ENCODE measurements at regions of chr2 and their contacts with region 1.

Region 1: DNA sequence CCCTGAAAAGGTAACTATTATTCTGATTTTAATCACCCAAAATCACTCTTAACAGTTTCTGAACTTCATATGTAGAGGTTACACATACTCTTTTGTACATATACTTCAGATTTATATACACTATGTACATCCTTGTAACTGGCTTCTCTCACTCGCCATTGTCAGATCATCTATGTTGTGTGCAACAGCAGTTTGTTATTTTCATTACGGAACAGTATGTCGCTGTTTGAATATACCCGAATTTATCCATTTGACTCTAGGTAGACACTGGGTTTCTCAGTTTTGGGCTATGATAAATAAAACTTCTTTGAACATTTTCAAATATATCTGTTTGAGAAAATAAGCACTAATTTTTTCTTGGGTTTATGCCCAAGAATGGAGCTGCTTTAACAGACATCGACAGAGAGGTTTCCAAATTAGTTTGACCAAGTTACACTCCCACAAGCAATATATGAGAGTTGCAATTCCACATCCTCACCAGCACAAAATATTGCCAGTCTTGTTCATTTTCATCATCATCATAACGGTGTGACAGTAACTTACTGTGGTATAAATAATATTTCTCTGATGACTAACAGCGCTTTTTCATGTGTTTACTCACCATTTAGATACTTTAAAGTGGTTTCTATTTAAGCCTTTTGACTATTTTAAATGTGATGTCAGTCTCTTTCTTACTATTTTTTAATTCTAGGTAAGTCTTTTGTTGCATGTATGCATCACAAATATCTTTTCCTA is 80.9 kb downstream of the SMC6 start:
- DNase-seq: no peak
- ATAC-seq: peak; percentile 59; the same call in 1 of the 2 replicates
- H3K4me3 ChIP-seq: no peak overlapping the region
- H3K27ac ChIP-seq: no peak overlapping the region
- H3K4me1 ChIP-seq: 0 out of 4 replicates have a peak, but pooled peaks cover 0 to 3% of the 10 kb centered on the region in 2 experiments
- H3K27me3 ChIP-seq: no peaks in the 10 kb centered on the region
- CTCF ChIP-seq: peak in 1 of 3 experiments; percentile 12; a peak in 1 of 6 replicates
- POLR2A ChIP-seq: no peak
- RAD21 ChIP-seq: no peak

Region 2: DNA sequence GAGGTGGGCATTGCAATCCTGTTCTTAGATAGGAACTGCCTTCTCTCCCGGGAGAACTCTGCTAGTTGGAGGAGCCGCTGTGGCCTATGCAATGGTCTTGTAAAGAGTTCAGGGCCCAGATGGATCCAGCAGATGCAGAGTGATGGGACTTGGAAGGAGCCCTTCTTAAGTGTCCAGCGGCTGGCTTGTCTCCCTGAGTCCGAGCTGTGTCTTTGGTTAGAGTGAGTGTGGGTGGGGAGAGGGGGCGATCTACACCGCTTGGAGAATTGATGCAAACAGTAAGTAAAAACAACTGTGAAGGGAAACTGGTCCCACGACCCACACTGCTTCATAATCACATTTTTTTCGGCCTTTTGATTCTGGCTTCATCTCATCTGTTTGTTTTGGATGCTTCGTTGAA is 917.3 kb before region 1 on chr2:
- CTCF ChIA-PET with region 1: no interaction called
- POLR2A ChIA-PET with region 1: no interaction called
- RAD21 ChIA-PET with region 1: no interaction called
- intact Hi-C with region 1: no loop called
- DNase-seq: no peak
- ATAC-seq: no peak
- H3K4me3 ChIP-seq: no peak overlapping the region
- H3K27ac ChIP-seq: no peak overlapping the region
- H3K4me1 ChIP-seq: no peaks in the 10 kb centered on the region
- H3K27me3 ChIP-seq: peaks cover 13% of the 10 kb centered on the region
- CTCF ChIP-seq: no peak
- POLR2A ChIP-seq: no peak
- RAD21 ChIP-seq: no peak

Region 3: GRCh38 chr2:17171446-17172049 is 501.2 kb before region 1 on chr2:
- CTCF ChIA-PET with region 1: no interaction called
- POLR2A ChIA-PET with region 1: no interaction called
- RAD21 ChIA-PET with region 1: no interaction called
- intact Hi-C with region 1: loop called (anchors 10 kb)
- DNase-seq: peak; percentile 29
- ATAC-seq: peak; percentile 88
- H3K4me3 ChIP-seq: no peak overlapping the region
- H3K27ac ChIP-seq: no peak overlapping the region
- H3K4me1 ChIP-seq: no peaks in the 10 kb centered on the region
- H3K27me3 ChIP-seq: peaks cover 35% of the 10 kb centered on the region
- CTCF ChIP-seq: peak; percentile 7 to 68 (median 56); a peak in 4 of 6 replicates
- POLR2A ChIP-seq: no peak
- RAD21 ChIP-seq: peak; percentile 31; the same call in 1 of the 2 replicates

Region 4: GRCh38 chr2:17355608-17356329 is 317.0 kb before region 1 on chr2:
- CTCF ChIA-PET with region 1: no interaction called
- POLR2A ChIA-PET with region 1: no interaction called
- RAD21 ChIA-PET with region 1: no interaction called
- intact Hi-C with region 1: no loop called
- DNase-seq: no peak
- ATAC-seq: no peak
- H3K4me3 ChIP-seq: no peak overlapping the region
- H3K27ac ChIP-seq: no peak overlapping the region
- H3K4me1 ChIP-seq: no peaks in the 10 kb centered on the region
- H3K27me3 ChIP-seq: no peaks in the 10 kb centered on the region
- CTCF ChIP-seq: no peak
- POLR2A ChIP-seq: no peak
- RAD21 ChIP-seq: no peak

Region 5: GRCh38 chr2:17470855-17471641 is 201.7 kb before region 1 on chr2:
- CTCF ChIA-PET with region 1: interaction called, 36 read pairs
- POLR2A ChIA-PET with region 1: interaction called, 3 read pairs
- RAD21 ChIA-PET with region 1: interaction called in 1 of 2 experiments, 11 read pairs
- intact Hi-C with region 1: loop called (anchors 1 kb)
- DNase-seq: peak; percentile 44
- ATAC-seq: peak; percentile 83
- H3K4me3 ChIP-seq: no peak overlapping the region
- H3K27ac ChIP-seq: no peak overlapping the region
- H3K4me1 ChIP-seq: no peaks in the 10 kb centered on the region
- H3K27me3 ChIP-seq: no peaks in the 10 kb centered on the region
- CTCF ChIP-seq: peak; percentile 64 to 88 (median 82)
- POLR2A ChIP-seq: no peak
- RAD21 ChIP-seq: peak; percentile 88

Region 6: DNA sequence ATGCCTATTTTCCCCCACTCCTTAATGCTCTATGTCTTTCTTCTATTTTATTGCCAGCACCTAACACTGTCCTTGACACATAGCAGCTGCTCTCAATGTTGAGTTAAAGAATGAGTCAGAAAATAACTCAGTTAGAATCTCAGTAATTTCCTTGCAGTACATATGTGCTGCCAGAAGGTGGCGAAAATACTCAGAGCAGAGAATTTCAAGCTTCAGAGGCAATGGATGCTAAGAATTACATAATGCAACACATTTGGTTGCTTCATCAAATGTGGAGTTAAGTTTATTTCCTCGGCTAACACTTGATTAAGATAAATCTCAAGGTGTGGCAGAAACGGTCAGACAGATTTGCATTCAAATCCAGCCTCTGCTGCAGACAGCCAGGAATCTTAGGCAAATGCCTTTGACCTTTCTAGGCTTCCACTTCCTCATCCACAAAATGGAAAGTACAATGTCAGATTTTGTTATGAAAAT is 26.6 kb before region 1 on chr2:
- CTCF ChIA-PET with region 1: interaction called, 41 read pairs
- POLR2A ChIA-PET with region 1: no interaction called
- RAD21 ChIA-PET with region 1: interaction called in 1 of 2 experiments, 4 read pairs
- intact Hi-C with region 1: no loop called
- DNase-seq: peak; percentile 44
- ATAC-seq: peak; percentile 47
- H3K4me3 ChIP-seq: no peak overlapping the region
- H3K27ac ChIP-seq: no peak overlapping the region
- H3K4me1 ChIP-seq: peaks cover 6 to 39% of the 10 kb centered on the region in 2 experiments
- H3K27me3 ChIP-seq: no peaks in the 10 kb centered on the region
- CTCF ChIP-seq: peak; percentile 55 to 88 (median 74); a peak in 5 of 6 replicates
- POLR2A ChIP-seq: no peak
- RAD21 ChIP-seq: peak; percentile 70